Tibial artery (tissue), 4 donors: ENCODE measurements at regions of chr7 and their contacts with region 1.

Region 1: DNA sequence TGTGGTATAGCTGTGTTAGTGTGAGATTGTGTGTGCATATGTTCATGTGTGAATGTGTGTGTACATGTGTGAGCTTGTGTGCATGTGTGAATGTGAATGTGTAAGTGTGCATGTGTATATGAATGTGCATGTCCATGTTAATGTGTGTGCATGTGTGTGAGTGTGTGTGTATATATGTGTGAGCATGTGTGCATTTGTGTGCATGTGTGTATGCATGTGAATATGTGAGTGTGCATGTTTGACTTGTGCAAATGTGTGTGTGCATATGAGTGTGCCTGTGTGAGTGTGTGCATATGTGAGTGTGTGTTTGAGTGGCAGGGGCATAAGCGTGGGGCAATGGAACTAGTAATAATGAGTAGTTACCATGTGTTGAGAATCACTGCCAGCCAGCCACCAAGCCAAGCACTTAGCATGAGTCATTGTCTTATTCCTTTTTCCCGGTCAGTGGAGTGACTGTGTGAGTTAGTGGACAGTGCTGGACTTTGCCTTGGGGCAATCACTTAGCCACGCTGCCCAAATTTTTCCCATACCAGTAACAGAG is 46.3 kb upstream of the SHH start:
- DNase-seq: peak in 1 of 2 donors; percentile 20
- H3K4me3 ChIP-seq: no peak overlapping the region
- H3K27ac ChIP-seq: no peak overlapping the region
- H3K4me1 ChIP-seq: no peaks in the 10 kb centered on the region
- H3K27me3 ChIP-seq: peaks cover 0 to 3% of the 10 kb centered on the region in 2 donors
- CTCF ChIP-seq: no peak

Region 2: GRCh38 chr7:155752756-155753445 is 105.7 kb before region 1 on chr7:
- intact Hi-C with region 1: no loop called
- DNase-seq: no peak
- H3K4me3 ChIP-seq: no peak overlapping the region
- H3K27ac ChIP-seq: no peak overlapping the region
- H3K4me1 ChIP-seq: peaks cover 0 to 44% (median 8%) of the 10 kb centered on the region in 4 donors
- H3K27me3 ChIP-seq: no peaks in the 10 kb centered on the region
- CTCF ChIP-seq: no peak

Region 3: GRCh38 chr7:155796381-155797261 is 62.0 kb before region 1 on chr7:
- intact Hi-C with region 1: loop called (anchors 10 kb)
- DNase-seq: peak in 1 of 2 donors; percentile 38
- H3K4me3 ChIP-seq: no peak overlapping the region
- H3K27ac ChIP-seq: no peak overlapping the region
- H3K4me1 ChIP-seq: peaks cover 0 to 9% (median 7%) of the 10 kb centered on the region in 4 donors
- H3K27me3 ChIP-seq: peaks cover 0 to 60% of the 10 kb centered on the region in 2 donors
- CTCF ChIP-seq: peak; percentile 61 to 91